ENCODE measurements at regions of chr5 and their contacts with region 1.

Region 1: GRCh38 chr5:149185067-149185466 is 43.8 kb downstream of the ABLIM3 start:
- DNase-seq: no peak
- ATAC-seq: no peak
- H3K4me3 ChIP-seq: no peak overlapping the region
- H3K27ac ChIP-seq: no peak overlapping the region
- H3K4me1 ChIP-seq: peaks cover 30% of the 10 kb centered on the region
- H3K27me3 ChIP-seq: no peaks in the 10 kb centered on the region
- CTCF ChIP-seq: no peak

Region 2: DNA sequence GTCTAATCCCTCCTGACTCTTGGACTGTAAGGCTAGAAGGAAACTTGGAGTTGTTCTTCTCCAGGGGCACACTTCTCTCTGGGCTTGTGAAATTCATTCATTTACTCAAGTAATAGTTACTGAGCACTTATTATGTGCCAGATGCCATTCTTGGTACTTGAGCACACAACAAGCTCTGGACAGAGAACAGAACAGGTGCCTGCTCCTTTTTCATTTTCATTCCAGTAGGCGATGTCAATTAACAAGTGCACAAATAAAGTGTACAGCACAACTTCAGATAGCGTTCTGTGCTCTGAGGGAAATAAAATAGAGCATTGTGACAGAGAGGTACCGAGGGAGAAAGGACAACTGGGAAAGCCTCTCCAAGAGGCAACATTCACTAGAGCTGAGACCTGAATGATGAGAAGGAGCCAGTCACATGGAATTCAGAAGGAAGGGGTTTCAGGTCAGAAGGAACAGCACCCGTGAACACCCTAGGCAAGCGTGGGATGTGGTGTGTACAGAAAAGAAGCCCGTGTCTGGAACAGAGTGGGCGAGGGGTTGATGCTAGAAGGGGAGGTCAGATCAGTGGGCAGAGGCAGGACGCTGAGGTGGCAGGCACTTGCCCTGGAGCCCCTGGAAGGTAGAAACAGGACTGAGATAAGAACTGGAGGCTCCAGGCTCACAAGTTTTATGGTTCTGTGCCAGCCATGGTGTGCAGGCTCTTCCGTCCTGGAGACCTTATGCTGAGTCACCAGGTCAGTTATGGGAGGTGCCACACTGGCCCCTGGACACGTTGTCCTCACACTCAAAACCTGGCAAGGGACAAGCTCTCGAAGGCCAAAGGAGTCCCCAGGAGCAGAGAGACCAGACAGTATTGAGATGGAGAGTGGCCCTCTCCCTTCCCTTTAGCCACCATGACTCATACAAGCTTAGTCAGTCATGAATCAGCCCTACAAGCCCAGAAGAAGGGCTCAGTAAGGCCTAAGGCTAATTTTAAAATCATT is 51.0 kb before region 1 on chr5:
- CTCF ChIA-PET with region 1: interaction called, 3 read pairs
- POLR2A ChIA-PET with region 1: interaction called, 4 read pairs
- intact Hi-C with region 1: loop called (anchors 1 kb)
- DNase-seq: peak; percentile 100
- ATAC-seq: peak; percentile 76
- H3K4me3 ChIP-seq: peak overlapping the region; percentile 1; the same call in 1 of the 2 replicates
- H3K27ac ChIP-seq: peak overlapping the region; percentile 86
- H3K4me1 ChIP-seq: peaks cover 64% of the 10 kb centered on the region
- H3K27me3 ChIP-seq: no peaks in the 10 kb centered on the region
- CTCF ChIP-seq: no peak